Naive thymus-derived CD4-positive, alpha-beta T cell (primary cell): ENCODE measurements at regions of chr10 and their contacts with region 1.

Region 1: GRCh38 chr10:73743905-73744663 is at the start of gene SEC24C:
- DNase-seq: peak; percentile 87 to 97 (median 95)
- ATAC-seq: peak; percentile 93
- H3K4me3 ChIP-seq: peak within 1 kb of the TSS; percentile 93
- H3K4me3 Mint-ChIP-seq: peak within 1 kb of the TSS; percentile 92 to 100 (median 100)
- H3K27ac ChIP-seq: peak within 1 kb of the TSS; percentile 91
- H3K27ac Mint-ChIP-seq: peak within 1 kb of the TSS; percentile 98 to 100 (median 100)
- H3K4me1 ChIP-seq: peaks cover 22 to 27% of the 10 kb centered on the region in 2 donors
- H3K4me1 Mint-ChIP-seq: peaks cover 18 to 47% (median 39%) of the 10 kb centered on the region in 7 donors
- H3K27me3 ChIP-seq: no peaks in the 10 kb centered on the region
- H3K27me3 Mint-ChIP-seq: no peaks in the 10 kb centered on the region
- total RNA-seq, gene SEC24C: 68.7 to 122 (median 95.4) TPM

Region 2: DNA sequence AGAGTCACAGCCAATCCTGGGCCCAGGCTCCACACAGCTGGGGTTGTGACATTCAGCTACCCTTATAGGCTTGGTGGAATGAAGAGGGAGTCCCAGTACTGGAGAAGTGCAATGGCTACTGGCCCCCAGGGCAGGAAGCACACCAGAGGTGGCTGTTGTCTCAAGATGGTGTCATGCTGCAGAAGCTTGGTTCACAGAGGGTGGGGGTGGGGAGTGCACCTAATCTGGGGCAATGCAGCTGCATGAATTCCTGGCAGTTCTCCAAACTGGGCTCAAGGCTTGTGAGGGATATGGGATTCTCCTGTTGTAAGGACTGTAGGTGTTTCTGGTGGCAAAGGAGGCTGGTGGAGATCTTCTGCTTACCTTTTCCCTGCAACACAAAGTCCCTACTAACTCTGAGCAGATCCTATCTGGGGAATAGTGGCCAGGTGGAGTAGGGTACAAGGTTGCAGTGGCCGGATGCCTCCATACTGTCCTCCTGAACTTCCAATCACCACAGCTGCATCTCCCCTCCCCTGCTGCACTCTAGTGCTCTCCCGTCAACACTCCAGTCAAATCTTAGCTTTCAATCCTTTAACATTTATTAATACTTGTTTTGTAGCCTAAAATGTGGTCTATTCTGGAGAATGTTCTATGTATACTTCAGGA is 762.1 kb before region 1 on chr10:
- CTCF ChIA-PET with region 1: no interaction called
- POLR2A ChIA-PET with region 1: no interaction called
- intact Hi-C with region 1: no loop called
- DNase-seq: no peak
- ATAC-seq: no peak
- H3K4me3 ChIP-seq: no peak overlapping the region
- H3K4me3 Mint-ChIP-seq: no peak overlapping the region
- H3K27ac ChIP-seq: no peak overlapping the region
- H3K27ac Mint-ChIP-seq: no peak overlapping the region
- H3K4me1 ChIP-seq: no peaks in the 10 kb centered on the region
- H3K4me1 Mint-ChIP-seq: no peaks in the 10 kb centered on the region
- H3K27me3 ChIP-seq: no peaks in the 10 kb centered on the region
- H3K27me3 Mint-ChIP-seq: peaks cover 0 to 42% (median 14%) of the 10 kb centered on the region in 5 donors

Region 3: DNA sequence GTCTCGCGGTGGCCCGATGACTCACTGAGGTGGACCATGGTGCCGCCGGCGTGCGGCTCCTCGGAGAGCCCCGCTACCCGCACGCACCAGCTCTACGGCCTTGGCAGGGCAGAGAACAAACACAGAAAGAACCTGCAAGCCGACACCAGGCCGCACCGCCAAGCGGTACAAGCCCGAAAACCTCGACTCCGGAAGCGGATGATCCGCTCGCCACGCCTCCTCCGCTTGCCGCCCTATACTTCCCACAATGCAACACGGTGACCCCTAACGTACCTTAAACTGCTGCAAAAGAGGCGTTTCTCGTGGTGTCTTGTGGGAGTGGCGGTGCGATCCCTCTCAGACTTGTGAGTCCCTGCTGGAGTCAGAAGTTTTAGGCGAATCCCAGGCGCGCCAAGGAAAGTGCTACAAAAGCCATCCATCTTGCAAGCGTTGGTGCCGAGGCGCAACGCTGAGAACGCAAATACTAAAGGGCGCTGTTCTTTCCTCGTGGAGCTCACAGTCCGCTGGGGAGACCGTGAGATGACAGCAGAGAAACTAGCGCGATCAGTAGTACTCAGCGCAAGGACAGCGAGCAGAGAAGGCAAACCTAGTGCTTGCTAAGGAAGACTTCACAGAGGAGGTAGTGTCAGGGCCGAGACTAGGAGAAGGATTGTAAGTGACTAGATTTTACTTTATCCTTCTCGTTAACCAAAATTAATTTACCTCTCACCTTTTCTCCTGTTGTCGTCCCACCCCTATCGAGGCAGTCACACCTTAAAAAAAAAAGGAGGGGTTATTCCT is 491.4 kb before region 1 on chr10 and contains the start of gene MRPS16:
- CTCF ChIA-PET with region 1: no interaction called
- POLR2A ChIA-PET with region 1: no interaction called
- intact Hi-C with region 1: loop called (anchors 1 to 5 kb)
- DNase-seq: peak; percentile 75 to 95 (median 93)
- ATAC-seq: peak; percentile 98
- H3K4me3 ChIP-seq: peak within 1 kb of the TSS; percentile 94
- H3K4me3 Mint-ChIP-seq: peak within 1 kb of the TSS; percentile 95 to 100 (median 99)
- H3K27ac ChIP-seq: peak within 1 kb of the TSS; percentile 92
- H3K27ac Mint-ChIP-seq: peak within 1 kb of the TSS; percentile 91 to 97 (median 94)
- H3K4me1 ChIP-seq: peaks cover 18 to 26% of the 10 kb centered on the region in 2 donors
- H3K4me1 Mint-ChIP-seq: peaks cover 19 to 50% (median 37%) of the 10 kb centered on the region in 7 donors
- H3K27me3 ChIP-seq: no peaks in the 10 kb centered on the region
- H3K27me3 Mint-ChIP-seq: peaks cover 0 to 2% (median 0%) of the 10 kb centered on the region in 5 donors
- total RNA-seq, gene MRPS16: 29.6 to 99.9 (median 47.6) TPM

Region 4: GRCh38 chr10:73413528-73414229 is 330.4 kb before region 1 on chr10 and contains the start of gene ANXA7:
- CTCF ChIA-PET with region 1: no interaction called
- POLR2A ChIA-PET with region 1: no interaction called
- intact Hi-C with region 1: loop called (anchors 5 kb)
- DNase-seq: peak; percentile 78 to 93 (median 85)
- ATAC-seq: peak; percentile 99
- H3K4me3 ChIP-seq: peak within 1 kb of the TSS; percentile 78
- H3K4me3 Mint-ChIP-seq: peak within 1 kb of the TSS; percentile 82 to 97 (median 94)
- H3K27ac ChIP-seq: peak within 1 kb of the TSS; percentile 98
- H3K27ac Mint-ChIP-seq: peak within 1 kb of the TSS; percentile 83 to 95 (median 90)
- H3K4me1 ChIP-seq: peaks cover 8 to 16% of the 10 kb centered on the region in 2 donors
- H3K4me1 Mint-ChIP-seq: peaks cover 39 to 60% (median 53%) of the 10 kb centered on the region in 7 donors
- H3K27me3 ChIP-seq: no peaks in the 10 kb centered on the region
- H3K27me3 Mint-ChIP-seq: peaks cover 0 to 4% (median 0%) of the 10 kb centered on the region in 5 donors
- total RNA-seq, gene ANXA7: 74.8 to 118 (median 97.3) TPM

Region 5: GRCh38 chr10:73772280-73773151 is 28.4 kb after region 1 on chr10:
- CTCF ChIA-PET with region 1: interaction called, 5 read pairs
- POLR2A ChIA-PET with region 1: interaction called, 62 read pairs
- intact Hi-C with region 1: loop called (anchors 1 kb)
- DNase-seq: peak; percentile 75 to 90 (median 83)
- ATAC-seq: peak; percentile 80
- H3K4me3 ChIP-seq: peak overlapping the region; percentile 69
- H3K4me3 Mint-ChIP-seq: peak overlapping the region; percentile 87 to 97 (median 95)
- H3K27ac ChIP-seq: peak overlapping the region; percentile 85
- H3K27ac Mint-ChIP-seq: peak overlapping the region; percentile 89 to 97 (median 94)
- H3K4me1 ChIP-seq: peaks cover 27 to 30% of the 10 kb centered on the region in 2 donors
- H3K4me1 Mint-ChIP-seq: peaks cover 34 to 73% (median 64%) of the 10 kb centered on the region in 7 donors
- H3K27me3 ChIP-seq: no peaks in the 10 kb centered on the region
- H3K27me3 Mint-ChIP-seq: no peaks in the 10 kb centered on the region

Region 6: DNA sequence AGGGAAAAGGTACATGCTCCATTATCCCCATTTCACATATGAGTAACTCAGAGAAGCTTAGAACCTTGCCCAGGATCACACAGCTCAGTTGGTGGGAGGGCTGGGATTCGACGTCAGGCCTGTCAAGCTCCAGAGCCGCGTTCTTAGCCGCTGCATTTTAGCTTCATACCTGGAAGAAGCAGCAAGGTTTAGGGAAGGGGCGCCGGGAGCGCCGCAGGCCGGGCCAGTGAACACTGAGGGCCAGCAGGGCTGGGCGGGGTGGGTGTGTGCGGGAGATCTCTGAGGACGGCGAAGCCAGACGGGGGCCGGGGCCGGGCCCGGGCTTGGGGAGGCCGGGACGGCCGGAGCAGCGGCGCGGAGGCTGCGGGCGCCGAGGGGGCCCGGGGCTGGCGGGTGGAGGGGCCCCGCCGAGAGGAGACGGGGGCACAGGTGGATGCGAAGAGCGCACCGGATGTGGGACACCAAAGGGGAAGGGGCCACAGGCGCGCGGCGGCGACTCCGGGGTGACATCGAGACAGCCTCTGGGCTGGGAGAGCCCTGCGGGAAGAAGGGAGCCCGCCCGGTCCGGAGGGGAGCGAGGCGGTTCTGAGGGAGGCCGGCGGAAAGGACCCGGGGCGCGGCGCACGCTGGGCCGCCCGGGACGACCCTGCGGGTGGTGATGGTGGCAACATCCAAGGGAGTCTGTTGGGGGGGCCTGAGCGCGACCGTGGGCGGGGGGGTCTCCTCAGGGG is 66.8 kb after region 1 on chr10:
- CTCF ChIA-PET with region 1: no interaction called
- POLR2A ChIA-PET with region 1: interaction called, 15 read pairs
- intact Hi-C with region 1: loop called (anchors 1 kb)
- DNase-seq: peak; percentile 46 to 76 (median 71)
- ATAC-seq: peak; percentile 18
- H3K4me3 ChIP-seq: peak overlapping the region; percentile 69
- H3K4me3 Mint-ChIP-seq: peak overlapping the region; percentile 88 to 97 (median 94)
- H3K27ac ChIP-seq: peak overlapping the region; percentile 97
- H3K27ac Mint-ChIP-seq: peak overlapping the region; percentile 94 to 98 (median 96)
- H3K4me1 ChIP-seq: peaks cover 26 to 31% of the 10 kb centered on the region in 2 donors
- H3K4me1 Mint-ChIP-seq: peaks cover 31 to 54% (median 49%) of the 10 kb centered on the region in 7 donors
- H3K27me3 ChIP-seq: no peaks in the 10 kb centered on the region
- H3K27me3 Mint-ChIP-seq: no peaks in the 10 kb centered on the region

Region 7: GRCh38 chr10:73997787-73998622 is 253.9 kb after region 1 on chr10 and contains the start of gene VCL:
- CTCF ChIA-PET with region 1: no interaction called
- POLR2A ChIA-PET with region 1: no interaction called
- intact Hi-C with region 1: loop called in 1 of 2 experiments (anchors 5 kb)
- DNase-seq: peak; percentile 90 to 97 (median 95)
- ATAC-seq: peak; percentile 99
- H3K4me3 ChIP-seq: peak within 1 kb of the TSS; percentile 71
- H3K4me3 Mint-ChIP-seq: peak within 1 kb of the TSS; percentile 83 to 100 (median 97)
- H3K27ac ChIP-seq: peak within 1 kb of the TSS; percentile 91
- H3K27ac Mint-ChIP-seq: peak within 1 kb of the TSS; percentile 83 to 99 (median 98)
- H3K4me1 ChIP-seq: peaks cover 19 to 22% of the 10 kb centered on the region in 2 donors
- H3K4me1 Mint-ChIP-seq: peaks cover 43 to 53% (median 48%) of the 10 kb centered on the region in 7 donors
- H3K27me3 ChIP-seq: no peaks in the 10 kb centered on the region
- H3K27me3 Mint-ChIP-seq: no peaks in the 10 kb centered on the region
- total RNA-seq, gene VCL: 9.0 to 67.7 (median 21.6) TPM